Activated CD4-positive, alpha-beta memory T cell treated with anti-CD3 and anti-CD28 coated beads, Interleukin-2, amount 10 ng/mL, durations not matched to agents 7 days and 5 days (primary cell): ENCODE measurements at regions of chr12 and their contacts with region 1.

Region 1: GRCh38 chr12:112937741-112938719 is at the start of gene OAS3:
- DNase-seq: peak; percentile 82
- H3K4me3 Mint-ChIP-seq: peak within 1 kb of the TSS; percentile 82
- H3K27ac Mint-ChIP-seq: peak within 1 kb of the TSS; percentile 93
- H3K4me1 Mint-ChIP-seq: peaks cover 51% of the 10 kb centered on the region
- H3K27me3 Mint-ChIP-seq: no peaks in the 10 kb centered on the region
- total RNA-seq, gene OAS3: 260 to 265 TPM

Region 2: GRCh38 chr12:112900299-112901145 is 37.5 kb before region 1 on chr12:
- CTCF ChIA-PET with region 1: interaction called, 14 read pairs
- POLR2A ChIA-PET with region 1: interaction called, 41 read pairs
- DNase-seq: peak; percentile 49
- H3K4me3 Mint-ChIP-seq: no peak overlapping the region
- H3K27ac Mint-ChIP-seq: no peak overlapping the region
- H3K4me1 Mint-ChIP-seq: peaks cover 38% of the 10 kb centered on the region
- H3K27me3 Mint-ChIP-seq: peaks cover 25% of the 10 kb centered on the region

Region 3: GRCh38 chr12:112906712-112907414 is 31.2 kb before region 1 on chr12 and contains the start of gene OAS1:
- CTCF ChIA-PET with region 1: interaction called, 13 read pairs
- POLR2A ChIA-PET with region 1: interaction called, 41 read pairs
- DNase-seq: peak; percentile 69
- H3K4me3 Mint-ChIP-seq: peak within 1 kb of the TSS; percentile 100
- H3K27ac Mint-ChIP-seq: peak within 1 kb of the TSS; percentile 99
- H3K4me1 Mint-ChIP-seq: peaks cover 78% of the 10 kb centered on the region
- H3K27me3 Mint-ChIP-seq: no peaks in the 10 kb centered on the region
- total RNA-seq, gene OAS1: 246 to 248 TPM